ENCODE measurements at regions of chr2 and their contacts with region 1.

Region 1: DNA sequence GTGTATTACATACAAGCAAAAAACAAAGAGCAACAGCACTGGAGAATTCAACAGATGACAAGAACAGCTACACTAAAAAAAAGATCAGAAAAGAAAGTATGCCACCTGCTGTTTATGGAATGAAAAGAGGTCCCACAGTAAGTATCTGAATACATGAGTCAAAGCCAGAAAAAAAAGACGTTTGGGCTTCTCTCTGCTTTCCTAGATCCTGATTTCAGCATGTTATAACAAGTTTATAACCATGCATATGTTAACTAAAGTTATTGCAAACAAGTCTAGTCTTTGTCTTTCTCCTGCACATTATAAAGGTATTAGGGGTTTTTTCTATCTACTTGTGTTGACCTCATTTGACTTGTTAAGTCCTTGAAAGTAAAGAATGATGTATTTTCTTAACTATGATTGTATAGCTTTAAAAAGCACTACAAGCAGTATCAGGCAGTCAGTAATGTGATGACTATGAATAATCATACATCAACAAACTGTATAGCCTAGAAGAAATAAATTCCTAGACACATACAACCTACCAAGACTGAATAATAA is 108.5 kb upstream of the COL5A2 start:
- DNase-seq: no peak
- H3K4me3 Mint-ChIP-seq: no peak overlapping the region
- H3K27ac Mint-ChIP-seq: no peak overlapping the region
- H3K4me1 Mint-ChIP-seq: peaks cover 30% of the 10 kb centered on the region
- H3K27me3 Mint-ChIP-seq: no peaks in the 10 kb centered on the region

Region 2: GRCh38 chr2:188524519-188525113 is 763.4 kb before region 1 on chr2:
- intact Hi-C with region 1: loop called (anchors 10 kb)
- DNase-seq: no peak
- H3K4me3 Mint-ChIP-seq: no peak overlapping the region
- H3K27ac Mint-ChIP-seq: no peak overlapping the region
- H3K4me1 Mint-ChIP-seq: no peaks in the 10 kb centered on the region
- H3K27me3 Mint-ChIP-seq: no peaks in the 10 kb centered on the region

Region 3: DNA sequence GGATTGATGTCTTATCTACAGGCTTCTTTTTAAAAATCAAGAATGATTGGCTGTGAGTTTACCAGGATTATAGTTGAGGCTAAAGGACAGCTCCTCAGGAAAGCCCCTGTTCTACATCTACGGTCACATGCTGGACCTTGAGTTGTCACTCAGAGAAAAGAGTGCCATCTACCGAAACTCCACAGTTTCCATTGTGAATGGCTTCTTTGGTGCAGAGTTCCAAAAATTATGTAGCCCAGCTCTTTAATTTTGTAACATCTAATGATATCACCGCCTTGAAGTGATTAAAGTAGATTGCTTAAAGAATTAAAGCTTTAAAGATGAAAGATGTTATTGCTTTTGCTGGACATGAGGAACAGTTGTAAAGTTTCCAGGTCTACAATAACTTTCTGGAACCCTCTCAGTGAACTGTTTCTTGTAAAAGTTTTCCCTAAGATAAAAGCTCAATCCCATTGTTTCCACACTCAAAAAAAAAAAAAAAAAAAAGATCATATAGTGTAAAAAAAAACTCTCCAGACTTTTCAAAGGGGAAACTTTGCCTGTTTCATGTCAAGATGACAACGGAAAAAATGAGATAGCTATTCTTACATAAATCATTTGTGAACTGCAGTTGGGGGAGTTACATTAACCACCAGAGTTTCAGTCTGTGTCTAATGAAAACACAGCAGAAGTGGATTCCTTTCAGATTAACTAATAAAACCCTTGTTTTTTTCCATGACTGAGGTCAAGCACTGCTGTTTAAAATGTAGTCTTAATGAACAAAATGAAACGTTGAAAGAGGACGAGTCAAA is 309.6 kb before region 1 on chr2:
- intact Hi-C with region 1: loop called (anchors 10 kb)
- DNase-seq: no peak
- H3K4me3 Mint-ChIP-seq: peak overlapping the region; percentile 53
- H3K27ac Mint-ChIP-seq: peak overlapping the region; percentile 84
- H3K4me1 Mint-ChIP-seq: peaks cover 15% of the 10 kb centered on the region
- H3K27me3 Mint-ChIP-seq: no peaks in the 10 kb centered on the region

Region 4: GRCh38 chr2:189096769-189097447 is 191.1 kb before region 1 on chr2:
- intact Hi-C with region 1: loop called (anchors 5 kb)
- DNase-seq: no peak
- H3K4me3 Mint-ChIP-seq: no peak overlapping the region
- H3K27ac Mint-ChIP-seq: no peak overlapping the region
- H3K4me1 Mint-ChIP-seq: no peaks in the 10 kb centered on the region
- H3K27me3 Mint-ChIP-seq: no peaks in the 10 kb centered on the region

Region 5: GRCh38 chr2:189142893-189143759 is 144.9 kb before region 1 on chr2:
- intact Hi-C with region 1: loop called (anchors 1 kb)
- DNase-seq: peak; percentile 17
- H3K4me3 Mint-ChIP-seq: no peak overlapping the region
- H3K27ac Mint-ChIP-seq: no peak overlapping the region
- H3K4me1 Mint-ChIP-seq: no peaks in the 10 kb centered on the region
- H3K27me3 Mint-ChIP-seq: no peaks in the 10 kb centered on the region

Region 6: DNA sequence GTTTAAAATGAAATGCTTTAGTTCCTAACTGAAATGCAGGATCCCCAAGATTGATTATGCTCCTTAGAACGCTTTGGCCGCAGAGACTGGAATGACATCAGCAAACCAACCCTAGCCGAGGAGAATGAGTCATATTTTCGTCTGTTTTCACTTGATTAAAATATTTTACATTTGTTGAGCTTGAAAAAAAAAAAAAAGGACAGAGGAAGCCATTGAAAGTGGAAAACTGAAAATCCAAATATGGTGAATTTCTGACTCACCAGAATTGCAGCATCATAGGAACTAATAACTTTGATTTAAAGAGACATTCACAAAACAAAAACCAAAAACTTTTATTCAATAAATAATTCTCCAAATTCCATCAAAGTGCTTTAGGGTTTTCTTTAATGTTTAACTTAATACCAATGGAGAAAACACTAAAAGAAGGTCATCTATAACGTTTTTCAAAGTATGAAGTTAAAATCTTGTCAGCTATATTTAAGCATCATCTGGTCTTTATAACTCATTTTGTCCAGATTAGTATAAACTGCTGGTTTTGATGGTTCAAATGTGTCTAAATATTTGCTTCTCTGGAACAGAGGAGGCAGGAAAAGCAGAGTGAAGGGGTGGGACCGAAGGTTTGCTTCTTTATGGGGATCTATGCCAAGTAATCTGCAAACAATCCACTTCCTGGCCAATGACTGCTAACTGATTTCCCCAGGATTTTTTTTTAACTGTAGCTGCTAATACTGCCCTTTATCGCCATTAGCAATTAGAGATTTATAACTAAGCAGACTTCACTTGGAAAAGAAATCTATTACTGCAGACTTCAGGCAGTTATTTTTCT is 77.6 kb before region 1 on chr2:
- intact Hi-C with region 1: loop called (anchors 5 kb)
- DNase-seq: no peak
- H3K4me3 Mint-ChIP-seq: no peak overlapping the region
- H3K27ac Mint-ChIP-seq: no peak overlapping the region
- H3K4me1 Mint-ChIP-seq: peaks cover 10% of the 10 kb centered on the region
- H3K27me3 Mint-ChIP-seq: no peaks in the 10 kb centered on the region